Activated naive CD4-positive, alpha-beta T cell treated with anti-CD3 and anti-CD28 coated beads for 36 hours (primary cell): ENCODE measurements at regions of chr1 and their contacts with region 1.

Region 1: GRCh38 chr1:76219366-76219818 is 144.8 kb downstream of the ST6GALNAC3 start:
- DNase-seq: no peak
- H3K4me3 Mint-ChIP-seq: no peak overlapping the region
- H3K27ac Mint-ChIP-seq: no peak overlapping the region
- H3K4me1 Mint-ChIP-seq: peaks cover 10% of the 10 kb centered on the region
- H3K27me3 Mint-ChIP-seq: no peaks in the 10 kb centered on the region

Region 2: GRCh38 chr1:76176020-76176419 is 43.4 kb before region 1 on chr1:
- CTCF ChIA-PET with region 1: no interaction called
- intact Hi-C with region 1: loop called (anchors 5 kb)
- DNase-seq: peak; percentile 37
- H3K4me3 Mint-ChIP-seq: no peak overlapping the region
- H3K27ac Mint-ChIP-seq: no peak overlapping the region
- H3K4me1 Mint-ChIP-seq: peaks cover 20% of the 10 kb centered on the region
- H3K27me3 Mint-ChIP-seq: no peaks in the 10 kb centered on the region